ENCODE measurements at regions of chr19 and their contacts with region 1.

Region 1: GRCh38 chr19:41439441-41440222 is at the start of gene DMAC2:
- DNase-seq: peak; percentile 92 to 99 (median 99)
- H3K4me3 ChIP-seq: peak within 1 kb of the TSS; percentile 59 to 96 (median 77)
- H3K27ac ChIP-seq: peak within 1 kb of the TSS; percentile 75 to 97 (median 93)
- H3K4me1 ChIP-seq: peaks cover 5 to 13% of the 10 kb centered on the region in 2 donors
- H3K27me3 ChIP-seq: no peaks in the 10 kb centered on the region
- CTCF ChIP-seq: peak in 4 of 6 experiments; percentile 30 to 37 (median 34)
- POLR2A ChIP-seq: peak; percentile 27 to 89
- total RNA-seq, gene DMAC2: 35.5 to 60.9 (median 46.5) TPM

Region 2: DNA sequence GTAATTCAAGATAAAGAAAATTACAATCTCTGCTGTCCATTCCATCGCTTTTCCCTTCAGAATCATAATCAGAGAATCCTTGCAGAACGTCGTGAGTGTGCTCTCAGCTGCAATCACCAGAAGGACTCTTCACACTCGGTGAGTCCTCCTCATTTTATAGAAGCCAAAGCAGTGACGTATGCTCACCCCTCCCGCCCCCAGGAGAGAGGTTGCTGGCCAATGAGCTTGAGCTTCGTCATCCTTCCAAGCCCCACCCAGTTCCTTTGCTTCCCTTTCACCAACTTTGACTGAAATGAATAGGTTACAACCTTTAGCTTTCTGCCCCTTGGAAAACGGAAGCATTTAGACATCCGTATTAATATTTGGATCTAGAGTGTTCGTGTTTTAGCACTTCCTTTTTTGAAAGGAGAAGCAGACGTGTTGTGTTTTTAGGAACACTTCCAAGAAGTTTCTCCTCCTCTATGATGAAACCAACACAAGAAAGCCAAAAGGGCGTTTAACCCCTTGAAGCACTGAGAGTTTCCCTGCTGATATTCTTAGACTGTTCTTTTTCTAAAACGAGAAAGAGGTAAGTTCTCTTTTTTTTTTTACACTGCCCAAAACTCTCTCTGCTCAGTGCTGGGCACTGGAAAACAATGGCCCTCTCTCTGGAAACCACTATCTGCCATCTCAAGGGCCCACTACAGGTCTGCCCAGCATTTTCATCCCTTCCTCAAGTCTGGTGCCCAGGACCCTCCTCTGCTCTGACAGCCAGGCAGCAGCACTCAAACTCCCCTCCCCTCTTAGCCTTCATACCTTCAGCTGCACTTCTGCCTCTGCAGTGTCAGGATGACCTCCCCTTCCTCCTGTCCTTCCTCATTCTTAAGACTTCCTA is 92.0 kb after region 1 on chr19:
- intact Hi-C with region 1: loop called in 1 of 2 experiments (anchors 10 kb)
- DNase-seq: peak; percentile 47 to 91 (median 75)
- H3K4me3 ChIP-seq: no peak overlapping the region
- H3K27ac ChIP-seq: peak overlapping the region in 4 of 5 donors; percentile 51 to 91 (median 70)
- H3K4me1 ChIP-seq: peaks cover 0 to 7% of the 10 kb centered on the region in 2 donors
- H3K27me3 ChIP-seq: no peaks in the 10 kb centered on the region
- CTCF ChIP-seq: no peak
- POLR2A ChIP-seq: peak; percentile 62 to 85

Region 3: DNA sequence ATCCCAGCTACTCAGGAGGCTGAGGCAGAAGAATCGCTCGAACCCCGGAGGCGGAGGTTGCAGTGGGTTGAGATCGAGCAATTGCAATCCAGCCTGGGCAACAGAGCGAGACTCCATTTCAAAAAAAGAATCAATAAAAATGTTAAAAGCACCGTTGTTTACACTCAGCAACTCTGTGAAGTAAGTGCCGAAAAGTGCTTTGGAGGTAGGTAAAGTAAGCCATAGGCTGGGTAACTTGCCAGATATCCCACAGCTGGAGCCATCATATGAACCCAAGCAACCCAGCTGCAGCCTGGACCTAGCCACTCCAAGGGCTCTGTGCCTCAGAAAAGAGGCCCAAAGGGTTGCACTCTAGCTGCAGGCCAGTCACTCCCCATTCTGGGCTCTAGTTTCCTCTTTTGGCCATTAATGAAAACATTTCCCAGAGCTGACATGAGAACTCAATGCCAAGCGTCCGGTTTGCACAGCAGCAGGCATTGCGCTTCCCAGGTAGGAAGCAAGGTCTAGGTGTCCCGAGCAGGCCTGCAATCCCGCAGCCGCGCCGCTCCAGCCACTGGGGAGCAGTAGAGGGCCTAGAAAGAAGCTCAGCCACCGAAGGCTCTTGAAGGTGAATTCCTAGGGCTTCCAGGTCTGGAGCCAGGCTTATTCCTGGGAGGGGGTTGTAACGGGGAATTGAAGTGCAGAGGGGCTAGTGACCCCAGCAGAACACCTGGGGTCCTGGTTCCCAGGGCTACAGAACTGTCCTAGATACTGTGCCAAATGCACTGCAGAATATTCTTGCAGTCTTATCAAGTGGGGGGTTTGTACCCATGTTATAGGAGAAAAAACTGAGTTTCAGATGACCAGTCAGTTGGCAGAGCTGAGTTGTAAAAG is 433.4 kb after region 1 on chr19:
- intact Hi-C with region 1: no loop called
- DNase-seq: peak; percentile 58 to 76 (median 67)
- H3K4me3 ChIP-seq: no peak overlapping the region
- H3K27ac ChIP-seq: no peak overlapping the region
- H3K4me1 ChIP-seq: no peaks in the 10 kb centered on the region
- H3K27me3 ChIP-seq: no peaks in the 10 kb centered on the region
- CTCF ChIP-seq: peak; percentile 25 to 67 (median 56)
- POLR2A ChIP-seq: no peak